Activated T-helper 2 cell treated with anti-CD3 and anti-CD28 coated beads, Interferon-gamma antibody, Interleukin-2, Interleukin-4, amounts not matched to agents 10 μg/mL and 5 μg/mL and 100 μg/mL, durations not matched to agents 14 hours and 24 hours and 36 hours (primary cell): ENCODE measurements at regions of chr7 and their contacts with region 1.

Region 1: GRCh38 chr7:114981323-114981722 is 59.4 kb downstream of the MDFIC start:
- DNase-seq: no peak
- H3K4me3 Mint-ChIP-seq: no peak overlapping the region
- H3K27ac Mint-ChIP-seq: peak overlapping the region; percentile 39
- H3K4me1 Mint-ChIP-seq: peaks cover 30% of the 10 kb centered on the region
- H3K27me3 Mint-ChIP-seq: no peaks in the 10 kb centered on the region

Region 2: DNA sequence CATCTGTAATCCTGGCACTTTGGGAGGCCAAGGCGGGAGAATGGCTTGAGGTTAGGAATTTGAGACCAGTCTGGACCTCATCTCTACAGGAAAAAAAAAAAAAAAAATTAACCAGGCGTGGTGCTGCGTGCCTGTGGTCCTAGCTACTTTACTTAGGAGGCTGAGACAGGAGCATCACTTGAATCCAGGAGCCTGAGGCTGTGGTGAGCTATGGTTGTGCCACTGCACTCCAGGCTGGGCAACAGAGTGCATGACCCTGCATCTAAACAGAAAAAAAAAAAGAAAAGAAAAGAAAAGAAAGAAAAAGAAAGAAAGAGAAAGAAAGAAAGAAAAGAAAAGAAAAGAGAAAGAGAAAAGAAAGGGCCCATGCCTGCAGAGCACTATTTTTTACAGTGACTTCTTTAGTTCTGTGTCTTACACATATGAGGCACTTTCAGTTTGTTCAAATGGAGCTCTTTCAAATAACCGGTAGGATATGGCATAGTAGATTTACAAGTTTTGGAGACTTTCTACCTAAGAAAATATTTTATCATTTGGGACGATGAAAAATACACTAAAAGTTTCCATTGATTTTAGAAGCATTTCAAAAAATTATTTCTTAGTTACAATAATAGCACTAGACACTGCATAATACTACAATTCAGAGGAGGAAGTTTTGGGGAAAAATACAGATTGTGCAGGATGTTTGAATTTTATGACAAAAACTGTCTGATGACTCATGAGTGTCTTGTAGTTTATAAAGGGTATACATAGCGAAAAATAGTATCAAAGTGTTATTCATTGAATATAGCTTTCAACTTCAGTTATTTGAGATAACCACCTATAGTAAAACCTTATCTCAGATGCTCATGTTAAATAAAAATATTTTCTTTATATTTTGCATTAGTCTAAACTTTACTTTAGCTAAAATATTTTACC is 16.4 kb after region 1 on chr7:
- intact Hi-C with region 1: loop called (anchors 2 kb)
- DNase-seq: no peak
- H3K4me3 Mint-ChIP-seq: no peak overlapping the region
- H3K27ac Mint-ChIP-seq: peak overlapping the region; percentile 75
- H3K4me1 Mint-ChIP-seq: peaks cover 48% of the 10 kb centered on the region
- H3K27me3 Mint-ChIP-seq: no peaks in the 10 kb centered on the region